Spleen (tissue), 13 donors: ENCODE measurements at regions of chr1 and their contacts with region 1.

Region 1: GRCh38 chr1:111789666-111790316 is 34.1 kb downstream of the DDX20 start:
- DNase-seq: no peak
- H3K4me3 ChIP-seq: no peak overlapping the region
- H3K27ac ChIP-seq: peak overlapping the region in 3 of 8 donors; percentile 8 to 45 (median 15)
- H3K4me1 ChIP-seq: peaks cover 0 to 13% (median 4%) of the 10 kb centered on the region in 6 donors
- H3K27me3 ChIP-seq: peaks cover 0 to 8% (median 0%) of the 10 kb centered on the region in 7 donors
- CTCF ChIP-seq: peak in 2 of 11 experiments; percentile 20 to 23
- POLR2A ChIP-seq: no peak

Region 2: GRCh38 chr1:111990878-111991718 is 201.3 kb after region 1 on chr1:
- intact Hi-C with region 1: loop called (anchors 10 kb)
- DNase-seq: no peak
- H3K4me3 ChIP-seq: peak overlapping the region in 7 of 8 donors; percentile 38 to 73 (median 51)
- H3K27ac ChIP-seq: peak overlapping the region in 6 of 8 donors; percentile 27 to 77 (median 63)
- H3K4me1 ChIP-seq: peaks cover 8 to 43% (median 28%) of the 10 kb centered on the region in 6 donors
- H3K27me3 ChIP-seq: peaks cover 0 to 87% (median 28%) of the 10 kb centered on the region in 7 donors
- CTCF ChIP-seq: peak in 4 of 11 experiments; percentile 10 to 47 (median 25)
- POLR2A ChIP-seq: no peak

Region 3: GRCh38 chr1:112144733-112145426 is 355.1 kb after region 1 on chr1:
- intact Hi-C with region 1: no loop called
- DNase-seq: no peak
- H3K4me3 ChIP-seq: no peak overlapping the region
- H3K27ac ChIP-seq: no peak overlapping the region
- H3K4me1 ChIP-seq: no peaks in the 10 kb centered on the region
- H3K27me3 ChIP-seq: peaks cover 0 to 35% (median 0%) of the 10 kb centered on the region in 7 donors
- CTCF ChIP-seq: no peak
- POLR2A ChIP-seq: no peak